ENCODE measurements at regions of chr2 and their contacts with region 1.

Region 1: DNA sequence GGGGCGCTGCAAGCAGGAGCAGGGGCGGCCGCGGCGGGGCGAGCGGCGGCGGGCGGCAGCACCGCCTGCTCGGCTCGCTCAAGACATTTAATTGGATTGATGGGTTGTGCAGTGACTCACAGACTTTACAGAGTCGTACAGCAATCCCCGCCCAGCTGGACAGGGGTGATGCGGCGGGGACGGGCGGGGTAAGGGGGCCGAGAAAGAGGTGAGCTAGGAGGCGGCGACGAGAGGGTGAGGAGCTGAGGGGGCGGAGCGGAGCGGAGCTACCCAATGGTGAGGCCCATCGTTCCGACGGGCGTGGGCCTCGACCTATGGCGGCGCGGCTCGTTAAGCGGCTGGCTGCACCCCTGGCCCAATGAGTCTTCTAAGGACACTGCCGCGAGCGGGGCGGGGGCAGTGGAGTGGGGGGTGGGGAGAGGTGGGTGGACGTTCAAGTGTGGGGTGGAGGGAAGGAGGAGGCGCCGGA is 97.1 kb upstream of the SERTAD2 start:
- DNase-seq: peak; percentile 99
- ATAC-seq: peak; percentile 95

Region 2: GRCh38 chr2:64653349-64654062 is 97.3 kb before region 1 on chr2 and contains the start of gene SERTAD2:
- intact Hi-C with region 1: loop called (anchors 5 kb)
- DNase-seq: peak; percentile 94
- ATAC-seq: peak; percentile 94
- total RNA-seq, gene SERTAD2: 25.5 TPM